B cell (primary cell): ENCODE measurements at regions of chr1 and their contacts with region 1.

Region 1: DNA sequence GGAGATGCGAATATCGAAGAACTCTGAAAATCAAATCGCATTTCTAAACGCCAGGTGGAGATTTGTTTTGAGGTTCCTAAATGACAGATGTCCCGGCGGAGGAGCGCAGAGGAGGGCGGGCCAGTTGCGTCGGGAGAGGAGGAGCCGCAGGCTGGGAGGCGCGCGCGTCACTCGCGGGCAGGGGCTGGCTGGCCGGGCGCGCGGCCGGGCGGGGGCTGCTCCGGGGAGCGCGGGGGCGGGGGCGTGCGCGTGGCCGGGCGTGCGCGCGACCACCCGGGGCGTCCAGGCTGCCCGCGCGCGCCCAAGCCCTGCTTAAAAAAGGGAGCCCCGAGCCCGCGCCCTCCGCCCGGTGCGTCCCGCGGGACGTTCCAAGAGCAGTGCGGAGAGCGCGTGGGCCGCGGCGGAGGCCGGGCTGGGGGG is 47.3 kb downstream of the H3-3A start:
- DNase-seq: peak; percentile 93
- ATAC-seq: peak; percentile 64
- H3K4me3 ChIP-seq: peak overlapping the region in 4 of 5 experiments; percentile 57 to 85 (median 72)
- H3K4me3 Mint-ChIP-seq: peak overlapping the region; percentile 96
- H3K27ac ChIP-seq: peak overlapping the region; percentile 96 to 99
- H3K27ac Mint-ChIP-seq: peak overlapping the region; percentile 98
- H3K4me1 ChIP-seq: peaks cover 36 to 44% of the 10 kb centered on the region in 2 donors
- H3K4me1 Mint-ChIP-seq: peaks cover 42% of the 10 kb centered on the region
- H3K27me3 ChIP-seq: no peaks in the 10 kb centered on the region
- H3K27me3 Mint-ChIP-seq: no peaks in the 10 kb centered on the region
- CTCF ChIP-seq: no peak

Region 2: GRCh38 chr1:225999227-225999911 is 110.5 kb before region 1 on chr1 and contains the start of gene SDE2:
- CTCF ChIA-PET with region 1: interaction called, 7 read pairs
- POLR2A ChIA-PET with region 1: interaction called, 18 read pairs
- intact Hi-C with region 1: loop called (anchors 1 kb)
- DNase-seq: peak; percentile 100
- ATAC-seq: peak; percentile 81
- H3K4me3 ChIP-seq: peak within 1 kb of the TSS; percentile 75 to 93 (median 88)
- H3K4me3 Mint-ChIP-seq: peak within 1 kb of the TSS; percentile 100
- H3K27ac ChIP-seq: peak within 1 kb of the TSS; percentile 100
- H3K27ac Mint-ChIP-seq: peak within 1 kb of the TSS; percentile 97
- H3K4me1 ChIP-seq: peaks cover 65 to 72% of the 10 kb centered on the region in 2 donors
- H3K4me1 Mint-ChIP-seq: peaks cover 74% of the 10 kb centered on the region
- H3K27me3 ChIP-seq: no peaks in the 10 kb centered on the region
- H3K27me3 Mint-ChIP-seq: no peaks in the 10 kb centered on the region
- CTCF ChIP-seq: no peak
- total RNA-seq, gene SDE2: 26.0 and 26.3 TPM in 2 replicates

Region 3: GRCh38 chr1:226029093-226029496 is 80.7 kb before region 1 on chr1:
- CTCF ChIA-PET with region 1: interaction called, 5 read pairs
- POLR2A ChIA-PET with region 1: interaction called, 11 read pairs
- intact Hi-C with region 1: no loop called
- DNase-seq: peak; percentile 90
- ATAC-seq: peak; percentile 92
- H3K4me3 ChIP-seq: peak overlapping the region in 1 of 5 experiments; percentile 9
- H3K4me3 Mint-ChIP-seq: peak overlapping the region; percentile 81
- H3K27ac ChIP-seq: peak overlapping the region; percentile 70 to 87
- H3K27ac Mint-ChIP-seq: peak overlapping the region; percentile 97
- H3K4me1 ChIP-seq: peaks cover 34 to 35% of the 10 kb centered on the region in 2 donors
- H3K4me1 Mint-ChIP-seq: peaks cover 44% of the 10 kb centered on the region
- H3K27me3 ChIP-seq: no peaks in the 10 kb centered on the region
- H3K27me3 Mint-ChIP-seq: no peaks in the 10 kb centered on the region
- CTCF ChIP-seq: no peak

Region 4: DNA sequence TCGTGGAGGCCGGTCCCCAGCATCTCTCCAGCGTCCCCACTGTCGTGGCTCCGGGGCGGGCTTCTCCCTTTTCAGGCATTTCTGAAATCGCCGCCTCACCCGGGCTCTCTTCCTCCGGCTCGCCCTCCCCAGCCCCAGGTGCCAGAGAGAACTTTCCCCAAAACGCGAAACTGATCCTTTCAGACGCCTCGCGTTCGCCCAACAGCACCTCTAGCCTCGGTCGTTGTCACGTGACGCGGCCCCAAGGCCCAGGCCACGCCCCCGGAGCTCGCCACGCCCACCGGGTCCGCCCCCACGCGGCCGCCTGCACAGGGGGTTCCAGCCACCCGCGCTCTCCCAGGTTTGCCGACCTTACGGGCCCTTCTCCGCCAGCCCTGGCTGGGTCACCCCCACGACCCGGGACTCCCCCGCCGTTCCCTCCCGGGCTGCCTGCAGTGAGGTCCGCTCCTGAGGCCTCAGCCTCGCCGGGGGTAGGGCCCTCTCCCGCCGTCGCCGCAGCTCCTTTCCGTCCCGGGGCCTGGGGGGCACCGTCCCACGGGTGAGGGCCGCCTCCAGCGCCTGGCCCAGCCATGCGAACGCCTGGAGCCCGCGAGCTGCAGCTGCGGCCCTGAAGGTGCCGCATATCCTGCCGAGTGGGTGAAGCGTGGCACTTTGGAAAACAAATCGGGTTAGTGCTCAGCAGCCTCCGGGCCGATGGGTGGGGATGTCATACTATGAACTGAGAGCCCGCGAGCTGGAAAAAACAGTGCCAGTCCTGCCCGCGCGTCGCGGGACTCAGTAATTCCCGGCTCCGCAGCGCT is 26.3 kb before region 1 on chr1:
- CTCF ChIA-PET with region 1: interaction called, 9 read pairs
- POLR2A ChIA-PET with region 1: interaction called, 30 read pairs
- intact Hi-C with region 1: loop called (anchors 1 kb)
- DNase-seq: peak; percentile 94
- ATAC-seq: peak; percentile 94
- H3K4me3 ChIP-seq: peak overlapping the region; percentile 15 to 83 (median 73)
- H3K4me3 Mint-ChIP-seq: peak overlapping the region; percentile 91
- H3K27ac ChIP-seq: peak overlapping the region; percentile 13 to 71
- H3K27ac Mint-ChIP-seq: peak overlapping the region; percentile 87
- H3K4me1 ChIP-seq: peaks cover 6 to 19% of the 10 kb centered on the region in 2 donors
- H3K4me1 Mint-ChIP-seq: peaks cover 13% of the 10 kb centered on the region
- H3K27me3 ChIP-seq: no peaks in the 10 kb centered on the region
- H3K27me3 Mint-ChIP-seq: no peaks in the 10 kb centered on the region
- CTCF ChIP-seq: no peak

Region 5: DNA sequence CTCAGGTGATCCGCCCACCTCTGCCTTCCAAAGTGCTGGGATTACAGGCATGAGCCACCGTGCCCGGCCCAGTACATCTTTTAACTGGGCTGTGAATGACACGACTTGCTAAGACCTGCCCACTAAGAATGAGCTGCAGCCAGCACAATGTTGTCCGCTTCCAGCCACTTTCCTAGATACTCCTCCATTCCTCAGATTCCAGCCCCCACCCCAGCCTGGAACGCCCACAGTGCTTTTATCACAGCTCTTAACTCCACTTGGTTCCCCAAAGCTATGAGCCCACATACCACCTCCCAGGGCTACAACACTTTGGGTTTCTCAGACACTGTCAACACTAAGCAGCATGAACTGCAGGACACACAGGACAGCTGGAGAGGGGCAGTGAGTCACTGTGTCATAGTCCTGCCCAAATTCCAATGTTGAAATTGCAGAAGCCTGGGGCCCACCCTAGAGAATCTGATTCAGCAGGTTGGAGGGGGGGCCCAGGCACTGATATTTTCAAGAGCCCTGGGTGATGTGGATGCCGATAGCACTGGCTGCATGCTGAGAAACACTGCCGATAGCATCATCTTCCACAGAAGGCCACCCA is 18.7 kb after region 1 on chr1:
- CTCF ChIA-PET with region 1: interaction called, 62 read pairs
- POLR2A ChIA-PET with region 1: interaction called, 47 read pairs
- intact Hi-C with region 1: loop called (anchors 2 kb)
- DNase-seq: no peak
- ATAC-seq: no peak
- H3K4me3 ChIP-seq: no peak overlapping the region
- H3K4me3 Mint-ChIP-seq: peak overlapping the region; percentile 90
- H3K27ac ChIP-seq: peak overlapping the region; percentile 94 to 97
- H3K27ac Mint-ChIP-seq: peak overlapping the region; percentile 100
- H3K4me1 ChIP-seq: peaks cover 96 to 100% of the 10 kb centered on the region in 2 donors
- H3K4me1 Mint-ChIP-seq: peaks cover 92% of the 10 kb centered on the region
- H3K27me3 ChIP-seq: no peaks in the 10 kb centered on the region
- H3K27me3 Mint-ChIP-seq: no peaks in the 10 kb centered on the region
- CTCF ChIP-seq: no peak

Region 6: DNA sequence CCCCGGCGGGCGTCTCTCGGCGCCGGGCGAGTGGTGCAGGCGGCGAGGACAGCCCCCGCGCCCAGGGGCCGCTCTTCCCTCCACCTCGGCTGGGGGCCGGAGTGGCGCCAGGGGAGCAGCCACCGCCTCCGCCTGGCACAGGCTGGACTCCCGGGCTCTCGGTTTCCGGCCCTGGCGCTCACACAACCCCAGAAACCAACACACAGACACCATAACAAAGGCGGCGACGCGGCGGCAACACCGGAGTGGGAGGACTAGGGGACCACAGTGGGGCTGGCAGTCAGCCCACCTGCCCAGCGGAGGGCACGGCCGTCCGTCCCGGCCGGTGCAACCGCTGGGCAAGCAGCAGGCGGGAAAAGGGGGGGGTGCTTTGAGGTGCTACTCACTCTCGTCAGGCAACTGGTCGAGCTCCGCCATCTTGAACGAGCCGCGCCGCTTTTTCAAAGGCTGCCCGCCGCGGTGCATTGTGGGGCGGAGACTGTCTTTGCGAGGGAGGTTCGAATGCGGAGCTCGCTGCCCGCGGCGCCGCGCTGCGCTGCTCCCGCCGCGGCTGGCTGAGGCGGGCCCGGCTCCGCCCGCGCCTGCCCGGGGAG is 199.0 kb after region 1 on chr1 and contains the start of gene LIN9:
- CTCF ChIA-PET with region 1: no interaction called
- POLR2A ChIA-PET with region 1: no interaction called
- intact Hi-C with region 1: loop called (anchors 5 kb)
- DNase-seq: peak; percentile 93
- ATAC-seq: peak; percentile 91
- H3K4me3 ChIP-seq: peak within 1 kb of the TSS; percentile 40 to 99 (median 96)
- H3K4me3 Mint-ChIP-seq: peak within 1 kb of the TSS; percentile 95
- H3K27ac ChIP-seq: peak within 1 kb of the TSS; percentile 25 to 81
- H3K27ac Mint-ChIP-seq: peak within 1 kb of the TSS; percentile 90
- H3K4me1 ChIP-seq: peaks cover 12 to 14% of the 10 kb centered on the region in 2 donors
- H3K4me1 Mint-ChIP-seq: peaks cover 21% of the 10 kb centered on the region
- H3K27me3 ChIP-seq: peaks cover 0 to 14% (median 2%) of the 10 kb centered on the region in 4 experiments
- H3K27me3 Mint-ChIP-seq: peaks cover 5% of the 10 kb centered on the region
- CTCF ChIP-seq: no peak
- total RNA-seq, gene LIN9: 6.4 and 6.7 TPM in 2 replicates